Activated T-helper 2 cell treated with anti-CD3 and anti-CD28 coated beads, Interferon-gamma antibody, Interleukin-2, Interleukin-4, amounts not matched to agents 10 μg/mL and 5 μg/mL and 100 μg/mL, durations not matched to agents 14 hours and 24 hours and 36 hours (primary cell): ENCODE measurements at regions of chr3 and their contacts with region 1.

Region 1: GRCh38 chr3:16884084-16884747 is 539 bp upstream of the PLCL2 start:
- DNase-seq: peak; percentile 57
- H3K4me3 Mint-ChIP-seq: peak overlapping the region; percentile 93
- H3K27ac Mint-ChIP-seq: peak overlapping the region; percentile 97
- H3K4me1 Mint-ChIP-seq: peaks cover 35% of the 10 kb centered on the region
- H3K27me3 Mint-ChIP-seq: peaks cover 17% of the 10 kb centered on the region

Region 2: GRCh38 chr3:16795581-16795980 is 88.6 kb before region 1 on chr3:
- intact Hi-C with region 1: loop called (anchors 5 kb)
- DNase-seq: no peak
- H3K4me3 Mint-ChIP-seq: no peak overlapping the region
- H3K27ac Mint-ChIP-seq: no peak overlapping the region
- H3K4me1 Mint-ChIP-seq: peaks cover 33% of the 10 kb centered on the region
- H3K27me3 Mint-ChIP-seq: peaks cover 11% of the 10 kb centered on the region

Region 3: DNA sequence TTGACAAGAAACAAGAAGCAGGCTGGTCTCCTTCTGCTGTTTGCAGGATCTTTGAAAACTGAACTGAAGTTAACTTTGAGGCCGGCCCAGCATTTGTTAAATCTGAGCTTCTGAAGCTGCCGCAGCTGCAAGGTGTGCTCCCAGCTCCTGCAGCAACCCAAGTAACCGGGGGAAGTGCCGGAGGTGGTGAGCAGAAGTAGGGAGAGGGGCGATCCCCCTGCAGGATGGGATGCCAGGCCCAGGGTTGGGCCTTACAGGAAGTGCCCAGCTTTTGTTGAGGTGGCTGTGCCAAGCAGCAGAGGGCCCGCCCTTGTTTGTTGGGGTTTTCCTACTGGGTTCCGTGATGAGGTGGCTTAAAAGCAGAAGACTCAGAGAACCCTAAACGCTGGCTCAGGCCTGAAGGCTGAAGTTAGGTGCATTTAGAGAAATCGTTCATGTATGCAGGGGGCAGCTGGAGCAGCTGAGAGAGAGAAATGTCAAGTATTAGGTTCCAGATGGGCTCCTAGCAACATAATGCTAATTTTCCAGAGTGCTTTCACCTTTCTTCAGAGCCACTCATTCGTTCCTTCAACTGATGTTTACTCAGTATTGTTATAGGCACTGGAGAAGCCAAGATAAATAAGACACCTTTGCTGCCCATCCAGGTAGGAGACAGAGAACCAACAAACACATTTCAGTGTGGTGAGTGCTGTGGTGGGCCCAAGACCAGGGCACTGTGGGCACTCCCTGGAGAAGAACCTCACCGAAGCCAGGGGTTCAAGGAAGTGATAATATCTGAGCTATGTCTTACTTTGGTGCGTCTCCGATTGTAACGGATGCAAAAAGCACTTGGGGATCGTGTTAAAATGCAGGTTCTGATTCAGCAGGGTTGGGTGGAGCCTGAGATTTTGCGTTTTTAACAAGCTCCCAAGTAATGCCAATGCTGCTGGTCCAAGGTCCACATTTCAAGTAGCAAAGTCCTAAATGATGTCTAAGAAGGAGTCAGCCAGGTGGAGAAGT is 41.6 kb before region 1 on chr3:
- intact Hi-C with region 1: loop called (anchors 2 kb)
- DNase-seq: peak; percentile 71
- H3K4me3 Mint-ChIP-seq: peak overlapping the region; percentile 75
- H3K27ac Mint-ChIP-seq: peak overlapping the region; percentile 94
- H3K4me1 Mint-ChIP-seq: peaks cover 60% of the 10 kb centered on the region
- H3K27me3 Mint-ChIP-seq: peaks cover 4% of the 10 kb centered on the region

Region 4: GRCh38 chr3:17023006-17023664 is 138.9 kb after region 1 on chr3:
- intact Hi-C with region 1: loop called (anchors 2 kb)
- DNase-seq: peak; percentile 24
- H3K4me3 Mint-ChIP-seq: peak overlapping the region; percentile 56
- H3K27ac Mint-ChIP-seq: peak overlapping the region; percentile 73
- H3K4me1 Mint-ChIP-seq: peaks cover 51% of the 10 kb centered on the region
- H3K27me3 Mint-ChIP-seq: no peaks in the 10 kb centered on the region

Region 5: GRCh38 chr3:17151598-17152373 is 267.6 kb after region 1 on chr3:
- intact Hi-C with region 1: loop called (anchors 1 kb)
- DNase-seq: peak; percentile 91
- H3K4me3 Mint-ChIP-seq: peak overlapping the region; percentile 49
- H3K27ac Mint-ChIP-seq: peak overlapping the region; percentile 91
- H3K4me1 Mint-ChIP-seq: peaks cover 66% of the 10 kb centered on the region
- H3K27me3 Mint-ChIP-seq: no peaks in the 10 kb centered on the region